ENCODE measurements at regions of chr20 and their contacts with region 1.

Region 1: DNA sequence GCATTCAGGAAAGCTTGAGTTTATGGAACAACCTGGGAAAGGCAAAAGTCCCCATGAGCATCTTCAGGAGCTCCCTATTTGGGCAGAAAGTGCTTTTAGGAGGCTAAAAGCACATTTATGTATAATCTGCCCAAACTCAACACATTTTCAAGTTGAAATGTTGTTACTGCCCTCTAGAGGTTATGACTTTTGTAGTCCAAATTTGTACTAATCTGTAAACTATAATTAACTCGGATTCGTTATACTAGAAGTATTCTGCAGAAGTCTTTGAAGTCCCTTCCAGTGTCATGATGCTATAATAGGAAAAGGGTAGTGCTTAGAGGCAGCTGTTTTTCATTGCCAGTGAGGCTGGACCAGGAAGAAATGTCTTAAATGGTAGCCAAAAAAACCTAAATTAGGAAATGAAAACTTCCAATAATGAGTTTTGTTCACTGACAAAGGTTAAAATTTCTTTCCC is 44.8 kb upstream of the EMILIN3 start:
- DNase-seq: no peak
- H3K4me3 ChIP-seq: no peak overlapping the region
- H3K27ac ChIP-seq: no peak overlapping the region
- H3K4me1 ChIP-seq: no peaks in the 10 kb centered on the region
- H3K27me3 ChIP-seq: no peaks in the 10 kb centered on the region
- CTCF ChIP-seq: peak; percentile 15 to 48 (median 25)
- EP300 ChIP-seq: no peak
- POLR2A ChIP-seq: no peak

Region 2: GRCh38 chr20:40970201-40970600 is 441.2 kb before region 1 on chr20:
- intact Hi-C with region 1: loop called in 1 of 4 experiments (anchors 10 kb)
- DNase-seq: no peak
- H3K4me3 ChIP-seq: no peak overlapping the region
- H3K27ac ChIP-seq: no peak overlapping the region
- H3K4me1 ChIP-seq: peaks cover 2% of the 10 kb centered on the region
- H3K27me3 ChIP-seq: no peaks in the 10 kb centered on the region
- CTCF ChIP-seq: no peak
- EP300 ChIP-seq: no peak
- POLR2A ChIP-seq: no peak

Region 3: DNA sequence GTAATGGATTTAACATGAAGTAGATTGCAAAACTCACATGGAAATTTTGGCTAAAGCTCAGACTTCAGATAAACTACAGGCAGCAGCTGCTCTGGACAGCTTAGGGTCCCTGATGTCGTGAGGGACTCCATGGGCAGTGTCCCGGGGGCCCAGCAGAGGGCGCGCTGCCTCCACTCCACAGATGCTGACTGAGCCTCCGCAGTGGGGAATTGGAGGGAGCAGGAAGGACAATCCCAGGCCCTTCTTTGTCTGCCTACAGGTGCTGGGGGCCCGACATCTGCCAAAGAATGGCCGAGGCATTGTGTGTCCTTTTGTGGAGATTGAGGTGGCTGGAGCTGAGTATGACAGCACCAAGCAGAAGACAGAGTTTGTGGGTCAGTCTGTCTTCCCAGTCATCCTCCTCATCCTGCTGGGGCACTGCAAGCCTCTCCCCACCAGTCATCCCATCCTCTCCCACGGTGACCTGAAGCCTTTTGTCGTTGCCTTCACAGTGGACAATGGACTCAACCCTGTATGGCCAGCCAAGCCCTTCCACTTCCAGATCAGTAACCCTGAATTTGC is 238.2 kb before region 1 on chr20:
- intact Hi-C with region 1: loop called in 2 of 4 experiments (anchors 1 to 10 kb)
- DNase-seq: peak; percentile 86 to 94 (median 91)
- H3K4me3 ChIP-seq: no peak overlapping the region
- H3K27ac ChIP-seq: peak overlapping the region in 1 of 2 donors; percentile 41
- H3K4me1 ChIP-seq: peaks cover 5% of the 10 kb centered on the region
- H3K27me3 ChIP-seq: no peaks in the 10 kb centered on the region
- CTCF ChIP-seq: peak; percentile 91 to 98 (median 96)
- EP300 ChIP-seq: no peak
- POLR2A ChIP-seq: no peak

Region 4: GRCh38 chr20:41352108-41352507 is 59.3 kb before region 1 on chr20:
- intact Hi-C with region 1: loop called in 1 of 4 experiments (anchors 5 kb)
- DNase-seq: no peak
- H3K4me3 ChIP-seq: no peak overlapping the region
- H3K27ac ChIP-seq: no peak overlapping the region
- H3K4me1 ChIP-seq: no peaks in the 10 kb centered on the region
- H3K27me3 ChIP-seq: no peaks in the 10 kb centered on the region
- CTCF ChIP-seq: no peak
- EP300 ChIP-seq: no peak
- POLR2A ChIP-seq: no peak

Measured in ovary (tissue), 10 donors.